Naive thymus-derived CD4-positive, alpha-beta T cell (primary cell): ENCODE measurements at regions of chr9 and their contacts with region 1.

Region 1: GRCh38 chr9:37753489-37754190 is at the start of gene TRMT10B:
- DNase-seq: peak; percentile 50 to 78 (median 70)
- ATAC-seq: peak; percentile 95
- H3K4me3 ChIP-seq: peak within 1 kb of the TSS; percentile 92
- H3K4me3 Mint-ChIP-seq: peak within 1 kb of the TSS; percentile 87 to 98 (median 96)
- H3K27ac ChIP-seq: peak within 1 kb of the TSS; percentile 87
- H3K27ac Mint-ChIP-seq: peak within 1 kb of the TSS; percentile 68 to 95 (median 92)
- H3K4me1 ChIP-seq: peaks cover 9 to 11% of the 10 kb centered on the region in 2 donors
- H3K4me1 Mint-ChIP-seq: peaks cover 26 to 52% (median 33%) of the 10 kb centered on the region in 7 donors
- H3K27me3 ChIP-seq: no peaks in the 10 kb centered on the region
- H3K27me3 Mint-ChIP-seq: no peaks in the 10 kb centered on the region
- total RNA-seq, gene TRMT10B: 16.0 to 28.9 (median 18.5) TPM

Region 2: DNA sequence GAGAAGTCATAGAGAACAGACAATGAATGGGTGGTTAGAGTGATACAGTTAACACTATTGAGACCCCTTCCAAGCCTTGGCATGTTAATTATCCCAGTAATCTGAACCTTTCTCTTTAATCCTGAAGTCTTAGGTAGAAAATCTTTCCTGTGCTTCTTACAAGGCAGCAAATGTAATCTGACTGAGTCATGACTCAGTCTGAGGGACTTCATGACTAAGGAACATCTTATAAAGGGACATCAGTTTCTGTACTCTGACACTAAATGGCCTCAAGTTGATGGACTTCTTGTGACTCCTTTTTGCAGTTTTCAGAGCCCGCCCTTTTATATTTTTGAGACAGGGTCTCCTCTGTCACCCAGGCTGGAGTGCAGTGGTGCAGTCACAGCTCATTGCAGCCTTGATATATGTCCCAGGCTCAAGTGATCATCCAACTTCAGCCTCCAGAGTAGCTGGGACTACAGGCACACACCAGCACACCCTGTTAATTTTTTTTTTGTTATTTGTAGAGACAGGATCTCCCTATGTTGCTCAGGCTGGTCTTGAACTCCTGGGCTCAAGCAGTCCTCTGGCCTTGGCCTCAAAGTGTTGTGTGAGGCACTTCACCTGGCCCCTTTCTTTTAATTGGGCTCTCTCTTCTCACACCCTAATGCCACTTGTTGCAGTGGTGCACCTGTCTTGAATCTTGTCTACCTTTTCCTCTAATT is 21.7 kb after region 1 on chr9:
- CTCF ChIA-PET with region 1: interaction called, 4 read pairs
- POLR2A ChIA-PET with region 1: interaction called, 3 read pairs
- intact Hi-C with region 1: loop called in 1 of 2 experiments (anchors 2 kb)
- DNase-seq: no peak
- ATAC-seq: no peak
- H3K4me3 ChIP-seq: no peak overlapping the region
- H3K4me3 Mint-ChIP-seq: no peak overlapping the region
- H3K27ac ChIP-seq: no peak overlapping the region
- H3K27ac Mint-ChIP-seq: peak overlapping the region in 3 of 9 donors; percentile 1 to 78 (median 43)
- H3K4me1 ChIP-seq: no peaks in the 10 kb centered on the region
- H3K4me1 Mint-ChIP-seq: peaks cover 0 to 5% (median 4%) of the 10 kb centered on the region in 7 donors
- H3K27me3 ChIP-seq: no peaks in the 10 kb centered on the region
- H3K27me3 Mint-ChIP-seq: no peaks in the 10 kb centered on the region

Region 3: GRCh38 chr9:37784616-37785483 is 31.2 kb after region 1 on chr9 and contains the start of gene EXOSC3:
- CTCF ChIA-PET with region 1: no interaction called
- POLR2A ChIA-PET with region 1: interaction called, 14 read pairs
- intact Hi-C with region 1: loop called (anchors 1 kb)
- DNase-seq: peak; percentile 66 to 85 (median 81)
- ATAC-seq: peak; percentile 92
- H3K4me3 ChIP-seq: peak within 1 kb of the TSS; percentile 92
- H3K4me3 Mint-ChIP-seq: peak within 1 kb of the TSS; percentile 96 to 98 (median 97)
- H3K27ac ChIP-seq: peak within 1 kb of the TSS; percentile 85
- H3K27ac Mint-ChIP-seq: peak within 1 kb of the TSS; percentile 95 to 98 (median 96)
- H3K4me1 ChIP-seq: peaks cover 18 to 21% of the 10 kb centered on the region in 2 donors
- H3K4me1 Mint-ChIP-seq: peaks cover 18 to 50% (median 40%) of the 10 kb centered on the region in 7 donors
- H3K27me3 ChIP-seq: no peaks in the 10 kb centered on the region
- H3K27me3 Mint-ChIP-seq: peaks cover 0 to 4% (median 0%) of the 10 kb centered on the region in 5 donors
- total RNA-seq, gene EXOSC3: 27.8 to 66.1 (median 60.7) TPM